ENCODE measurements at regions of chr12 and their contacts with region 1.

Region 1: DNA sequence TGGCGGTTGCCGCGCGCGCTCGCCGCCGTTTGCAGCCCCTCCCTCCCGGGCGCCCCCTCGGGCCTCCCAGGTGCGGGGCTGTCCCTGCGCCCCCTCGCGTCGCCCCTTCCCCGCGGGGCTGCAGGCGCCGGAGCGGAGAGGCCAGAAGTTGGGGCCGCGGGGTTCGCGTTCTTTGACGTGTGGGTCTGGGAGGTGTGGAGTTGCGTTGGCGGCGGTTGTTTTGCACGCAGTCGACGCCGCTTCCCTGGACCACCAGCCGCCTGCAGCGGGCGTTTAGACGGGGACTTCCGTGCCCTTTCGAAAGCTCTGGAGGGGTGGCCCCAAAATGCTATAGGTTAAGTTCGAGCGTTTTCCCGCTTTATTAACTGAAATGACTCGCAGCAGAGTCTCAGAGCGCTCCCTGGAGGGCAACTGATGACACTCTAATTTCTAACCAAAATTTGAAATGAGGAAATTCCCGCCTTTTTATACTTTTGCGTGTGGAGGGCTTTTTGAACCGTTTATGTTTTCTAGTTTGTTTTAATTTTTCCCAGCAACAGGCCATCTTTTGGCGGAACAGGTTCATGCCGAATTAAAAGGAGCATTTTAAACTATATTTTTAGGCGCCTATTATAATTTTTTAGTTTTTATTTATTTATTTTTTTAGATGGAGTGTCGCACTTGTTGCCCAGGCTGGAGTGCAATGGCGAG is 939 bp downstream of the TMPO start:
- DNase-seq: peak; percentile 79
- ATAC-seq: peak; percentile 64
- H3K4me3 ChIP-seq: peak overlapping the region; percentile 92
- H3K27ac ChIP-seq: peak overlapping the region; percentile 99
- H3K4me1 ChIP-seq: peaks cover 13% of the 10 kb centered on the region
- H3K27me3 ChIP-seq: no peaks in the 10 kb centered on the region
- CTCF ChIP-seq: peak; percentile 48 to 90 (median 71)
- EP300 ChIP-seq: 0 out of 4 replicates have a peak, but pooled peaks of 1 of the 2 experiments have one; percentile 12
- POLR2A ChIP-seq: peak; percentile 65
- RAD21 ChIP-seq: peak; percentile 76

Region 2: GRCh38 chr12:98319716-98320425 is 196.5 kb before region 1 on chr12:
- CTCF ChIA-PET with region 1: no interaction called
- POLR2A ChIA-PET with region 1: no interaction called
- RAD21 ChIA-PET with region 1: no interaction called
- SMC1A ChIA-PET with region 1: no interaction called
- in situ Hi-C with region 1: no loop called
- intact Hi-C with region 1: loop called (anchors 5 kb)
- DNase-seq: no peak
- ATAC-seq: peak; percentile 4; the same call in 2 of the 3 replicates
- H3K4me3 ChIP-seq: no peak overlapping the region
- H3K27ac ChIP-seq: no peak overlapping the region
- H3K4me1 ChIP-seq: peaks cover 2% of the 10 kb centered on the region; the same call in 1 of the 2 replicates
- H3K27me3 ChIP-seq: no peaks in the 10 kb centered on the region
- CTCF ChIP-seq: no peak
- EP300 ChIP-seq: no peak
- POLR2A ChIP-seq: no peak
- RAD21 ChIP-seq: no peak

Region 3: GRCh38 chr12:98424726-98425401 is 91.5 kb before region 1 on chr12:
- CTCF ChIA-PET with region 1: interaction called, 3 read pairs
- POLR2A ChIA-PET with region 1: interaction called, 3 read pairs
- RAD21 ChIA-PET with region 1: interaction called, 3 read pairs
- SMC1A ChIA-PET with region 1: interaction called, 3 read pairs
- in situ Hi-C with region 1: no loop called
- intact Hi-C with region 1: loop called (anchors 1 kb)
- DNase-seq: no peak
- ATAC-seq: peak; percentile 95
- H3K4me3 ChIP-seq: no peak overlapping the region
- H3K27ac ChIP-seq: no peak overlapping the region
- H3K4me1 ChIP-seq: no peaks in the 10 kb centered on the region
- H3K27me3 ChIP-seq: no peaks in the 10 kb centered on the region
- CTCF ChIP-seq: peak; percentile 62 to 71 (median 67)
- EP300 ChIP-seq: no peak
- POLR2A ChIP-seq: no peak
- RAD21 ChIP-seq: peak; percentile 50

Region 4: DNA sequence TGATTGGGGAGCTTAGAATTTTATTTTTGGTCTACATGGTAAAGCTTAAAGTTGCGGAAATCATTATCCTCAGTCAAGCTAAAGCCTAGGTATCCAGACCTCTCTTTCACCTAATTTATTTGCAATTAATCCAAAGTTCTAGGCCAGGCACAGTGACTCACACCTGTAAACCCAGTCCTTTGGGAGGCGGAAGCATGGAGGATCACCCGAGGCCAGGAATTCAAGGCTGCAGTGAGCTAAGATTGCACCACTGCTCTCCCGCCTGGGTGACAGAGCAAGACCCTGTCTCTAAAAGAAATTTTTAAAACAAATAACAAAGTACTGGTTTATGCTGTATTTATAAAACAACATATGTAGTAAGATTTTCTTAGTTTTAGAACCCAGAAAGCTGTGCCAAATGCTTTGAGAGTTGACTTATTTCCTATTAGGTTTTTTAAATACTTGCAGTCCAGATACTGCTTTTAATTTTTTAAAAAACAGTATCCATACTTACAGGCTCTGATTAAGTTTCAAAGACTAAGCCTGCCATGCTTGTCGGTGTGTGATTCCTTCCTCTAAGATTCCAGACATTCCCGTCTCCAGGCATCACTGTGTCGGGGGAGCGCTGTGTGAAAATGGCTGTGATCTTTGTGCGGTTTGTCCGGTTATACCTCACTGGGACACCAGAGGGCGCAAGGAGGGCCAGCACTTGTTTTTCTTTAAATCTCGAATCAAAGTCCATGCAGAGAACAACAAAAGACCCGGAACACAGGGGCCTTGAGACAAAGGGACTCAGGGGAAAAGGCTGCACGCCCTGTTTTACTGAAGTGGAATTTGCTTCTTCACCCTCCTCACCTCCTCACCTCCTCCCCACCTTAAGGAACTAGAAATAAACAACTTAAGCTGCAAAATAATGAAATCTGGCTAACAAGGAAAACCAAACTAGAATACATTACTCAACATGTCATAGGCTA is 25.6 kb before region 1 on chr12:
- CTCF ChIA-PET with region 1: interaction called, 101 read pairs
- POLR2A ChIA-PET with region 1: interaction called, 20 read pairs
- RAD21 ChIA-PET with region 1: interaction called, 17 read pairs
- SMC1A ChIA-PET with region 1: interaction called, 44 read pairs
- in situ Hi-C with region 1: no loop called
- intact Hi-C with region 1: loop called (anchors 1 kb)
- DNase-seq: peak; percentile 64
- ATAC-seq: peak; percentile 95
- H3K4me3 ChIP-seq: no peak overlapping the region
- H3K27ac ChIP-seq: peak overlapping the region; percentile 32
- H3K4me1 ChIP-seq: peaks cover 3% of the 10 kb centered on the region; the same call in 1 of the 2 replicates
- H3K27me3 ChIP-seq: no peaks in the 10 kb centered on the region; a peak in 1 of 4 replicates
- CTCF ChIP-seq: peak; percentile 82 to 89 (median 85)
- EP300 ChIP-seq: no peak
- POLR2A ChIP-seq: peak; percentile 54; the same call in 1 of the 2 replicates
- RAD21 ChIP-seq: peak; percentile 73

Region 5: GRCh38 chr12:98503592-98504367 is 12.5 kb before region 1 on chr12:
- CTCF ChIA-PET with region 1: interaction called, 29 read pairs
- POLR2A ChIA-PET with region 1: interaction called, 11 read pairs
- RAD21 ChIA-PET with region 1: interaction called, 7 read pairs
- SMC1A ChIA-PET with region 1: interaction called, 7 read pairs
- in situ Hi-C with region 1: no loop called
- intact Hi-C with region 1: loop called (anchors 1 kb)
- DNase-seq: peak; percentile 91
- ATAC-seq: peak; percentile 88
- H3K4me3 ChIP-seq: peak overlapping the region; percentile 75; the same call in 1 of the 2 replicates
- H3K27ac ChIP-seq: peak overlapping the region; percentile 99
- H3K4me1 ChIP-seq: peaks cover 3% of the 10 kb centered on the region; the same call in 1 of the 2 replicates
- H3K27me3 ChIP-seq: no peaks in the 10 kb centered on the region
- CTCF ChIP-seq: no peak
- EP300 ChIP-seq: no peak; a peak in 1 of 4 replicates
- POLR2A ChIP-seq: peak; percentile 89
- RAD21 ChIP-seq: 0 out of 2 replicates have a peak, but pooled peaks have one; percentile 13

Region 6: DNA sequence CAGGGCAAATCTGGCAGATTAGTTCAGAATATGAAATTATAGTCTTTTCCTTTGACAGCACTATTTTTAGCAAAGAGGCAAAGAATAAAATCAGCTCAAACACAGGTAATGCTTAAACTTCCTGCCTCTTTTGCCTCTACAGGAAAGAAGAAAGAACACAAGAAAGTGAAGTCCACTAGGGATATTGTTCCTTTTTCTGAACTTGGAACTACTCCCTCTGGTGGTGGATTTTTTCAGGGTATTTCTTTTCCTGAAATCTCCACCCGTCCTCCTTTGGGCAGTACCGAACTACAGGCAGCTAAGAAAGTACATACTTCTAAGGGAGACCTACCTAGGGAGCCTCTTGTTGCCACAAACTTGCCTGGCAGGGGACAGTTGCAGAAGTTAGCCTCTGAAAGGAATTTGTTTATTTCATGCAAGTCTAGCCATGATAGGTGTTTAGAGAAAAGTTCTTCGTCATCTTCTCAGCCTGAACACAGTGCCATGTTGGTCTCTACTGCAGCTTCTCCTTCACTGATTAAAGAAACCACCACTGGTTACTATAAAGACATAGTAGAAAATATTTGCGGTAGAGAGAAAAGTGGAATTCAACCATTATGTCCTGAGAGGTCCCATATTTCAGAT is 16.5 kb after region 1 on chr12:
- CTCF ChIA-PET with region 1: interaction called, 76 read pairs
- POLR2A ChIA-PET with region 1: interaction called, 3 read pairs
- RAD21 ChIA-PET with region 1: interaction called, 4 read pairs
- SMC1A ChIA-PET with region 1: interaction called, 8 read pairs
- in situ Hi-C with region 1: no loop called
- intact Hi-C with region 1: no loop called
- DNase-seq: no peak
- ATAC-seq: peak; percentile 76
- H3K4me3 ChIP-seq: no peak overlapping the region
- H3K27ac ChIP-seq: no peak overlapping the region
- H3K4me1 ChIP-seq: no peaks in the 10 kb centered on the region
- H3K27me3 ChIP-seq: no peaks in the 10 kb centered on the region
- CTCF ChIP-seq: peak; percentile 47 to 48 (median 48)
- EP300 ChIP-seq: no peak
- POLR2A ChIP-seq: no peak
- RAD21 ChIP-seq: peak; percentile 25; the same call in 1 of the 2 replicates

Measured in GM12878 (cell line).